MCF 10A (cell line): ENCODE measurements at regions of chr10 and their contacts with region 1.

Region 1: GRCh38 chr10:119103903-119104652 is at the start of gene DENND10:
- DNase-seq: peak; percentile 73
- H3K4me3 Mint-ChIP-seq: peak within 1 kb of the TSS; percentile 66
- H3K27ac Mint-ChIP-seq: no peak within 1 kb of the TSS
- H3K4me1 Mint-ChIP-seq: peaks cover 19% of the 10 kb centered on the region
- H3K27me3 Mint-ChIP-seq: no peaks in the 10 kb centered on the region
- CTCF ChIP-seq: no peak
- total RNA-seq, gene DENND10: 27.2 and 35.3 TPM in 2 replicates

Region 2: DNA sequence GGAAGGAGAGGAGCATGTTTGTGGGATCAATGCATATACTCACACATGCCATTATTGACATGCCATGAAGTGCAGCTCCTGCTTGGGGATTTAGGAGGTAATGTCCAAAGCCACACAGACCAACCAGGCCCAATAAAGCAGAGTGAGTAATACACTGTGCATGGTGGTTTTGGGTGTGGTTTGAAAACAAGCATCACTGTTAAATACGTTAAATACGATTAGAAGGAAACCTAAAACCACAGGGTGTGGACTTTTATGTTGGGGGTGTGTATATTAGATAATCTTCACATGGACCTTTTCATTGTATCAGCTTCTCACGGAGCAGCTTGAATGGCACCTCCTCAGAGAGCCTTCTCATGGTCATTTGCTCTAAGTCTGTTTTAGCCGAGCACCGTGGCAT is 13.1 kb before region 1 on chr10:
- CTCF ChIA-PET with region 1: interaction called, 4 read pairs
- POLR2A ChIA-PET with region 1: interaction called, 15 read pairs
- intact Hi-C with region 1: no loop called
- DNase-seq: peak; percentile 80
- H3K4me3 Mint-ChIP-seq: no peak overlapping the region
- H3K27ac Mint-ChIP-seq: peak overlapping the region; percentile 49
- H3K4me1 Mint-ChIP-seq: peaks cover 20% of the 10 kb centered on the region
- H3K27me3 Mint-ChIP-seq: no peaks in the 10 kb centered on the region
- CTCF ChIP-seq: no peak